Panc1 (cell line): ENCODE measurements at regions of chr7 and their contacts with region 1.

Region 1: DNA sequence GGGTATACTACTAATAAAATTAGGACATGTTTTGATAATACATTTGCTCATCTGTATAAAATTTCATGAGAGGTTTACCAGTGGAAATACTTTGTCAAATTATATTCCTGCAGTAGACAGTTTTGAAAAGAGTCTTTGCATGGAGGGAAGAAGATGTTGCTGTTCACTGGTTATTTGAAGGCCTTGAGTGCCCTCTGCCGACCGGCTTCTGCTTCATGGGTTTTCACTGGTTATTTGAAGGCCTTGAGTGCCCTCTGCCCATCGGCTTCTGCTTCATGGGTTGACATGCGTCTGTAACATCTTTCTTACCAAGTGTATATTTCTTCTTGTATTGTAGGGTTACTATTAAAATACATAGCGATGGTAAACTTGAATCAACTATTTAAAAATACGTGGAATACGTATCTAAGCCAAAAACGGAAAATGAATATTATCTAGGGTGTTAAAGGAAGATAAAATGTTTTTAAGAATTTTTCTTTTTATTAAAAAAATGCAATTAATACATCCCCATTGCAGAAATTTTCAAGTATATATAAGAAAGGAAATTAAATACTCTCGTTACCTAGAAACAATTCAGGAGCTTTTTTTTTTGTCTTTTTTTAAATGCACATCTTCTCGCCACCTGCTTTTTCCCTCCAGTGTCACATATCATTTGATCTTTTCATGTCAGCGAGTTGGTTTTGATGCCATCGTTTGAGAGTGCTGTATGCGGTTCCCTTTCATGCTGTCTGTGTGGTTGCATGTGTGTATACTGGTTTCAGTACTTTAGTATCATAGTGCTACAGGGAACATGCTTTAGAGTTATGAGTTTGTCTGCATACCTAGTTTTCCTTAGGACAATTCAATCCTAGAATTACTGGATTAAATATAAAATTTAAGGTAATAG is 73.4 kb downstream of the SHH start:
- DNase-seq: peak; percentile 76
- ATAC-seq: peak; percentile 94
- H3K4me3 ChIP-seq: no peak overlapping the region
- H3K27ac ChIP-seq: no peak overlapping the region
- H3K4me1 ChIP-seq: no peaks in the 10 kb centered on the region
- H3K27me3 ChIP-seq: no peaks in the 10 kb centered on the region
- CTCF ChIP-seq: peak; percentile 85

Region 2: GRCh38 chr7:155380221-155380861 is 358.6 kb before region 1 on chr7:
- CTCF ChIA-PET with region 1: no interaction called
- POLR2A ChIA-PET with region 1: no interaction called
- in situ Hi-C with region 1: no loop called
- intact Hi-C with region 1: loop called (anchors 10 kb)
- DNase-seq: peak; percentile 51
- ATAC-seq: peak; percentile 85
- H3K4me3 ChIP-seq: no peak overlapping the region
- H3K27ac ChIP-seq: no peak overlapping the region
- H3K4me1 ChIP-seq: peaks cover 4% of the 10 kb centered on the region
- H3K27me3 ChIP-seq: peaks cover 48% of the 10 kb centered on the region
- CTCF ChIP-seq: peak; percentile 91

Region 3: GRCh38 chr7:155598810-155599210 is 140.1 kb before region 1 on chr7:
- CTCF ChIA-PET with region 1: interaction called, 3 read pairs
- POLR2A ChIA-PET with region 1: no interaction called
- in situ Hi-C with region 1: no loop called
- intact Hi-C with region 1: loop called (anchors 1 kb)
- DNase-seq: peak; percentile 69
- ATAC-seq: peak; percentile 91
- H3K4me3 ChIP-seq: no peak overlapping the region
- H3K27ac ChIP-seq: no peak overlapping the region
- H3K4me1 ChIP-seq: no peaks in the 10 kb centered on the region; the same call in 1 of the 2 replicates
- H3K27me3 ChIP-seq: no peaks in the 10 kb centered on the region
- CTCF ChIP-seq: peak; percentile 95